CD4-positive, alpha-beta memory T cell (primary cell): ENCODE measurements at regions of chr5 and their contacts with region 1.

Region 1: DNA sequence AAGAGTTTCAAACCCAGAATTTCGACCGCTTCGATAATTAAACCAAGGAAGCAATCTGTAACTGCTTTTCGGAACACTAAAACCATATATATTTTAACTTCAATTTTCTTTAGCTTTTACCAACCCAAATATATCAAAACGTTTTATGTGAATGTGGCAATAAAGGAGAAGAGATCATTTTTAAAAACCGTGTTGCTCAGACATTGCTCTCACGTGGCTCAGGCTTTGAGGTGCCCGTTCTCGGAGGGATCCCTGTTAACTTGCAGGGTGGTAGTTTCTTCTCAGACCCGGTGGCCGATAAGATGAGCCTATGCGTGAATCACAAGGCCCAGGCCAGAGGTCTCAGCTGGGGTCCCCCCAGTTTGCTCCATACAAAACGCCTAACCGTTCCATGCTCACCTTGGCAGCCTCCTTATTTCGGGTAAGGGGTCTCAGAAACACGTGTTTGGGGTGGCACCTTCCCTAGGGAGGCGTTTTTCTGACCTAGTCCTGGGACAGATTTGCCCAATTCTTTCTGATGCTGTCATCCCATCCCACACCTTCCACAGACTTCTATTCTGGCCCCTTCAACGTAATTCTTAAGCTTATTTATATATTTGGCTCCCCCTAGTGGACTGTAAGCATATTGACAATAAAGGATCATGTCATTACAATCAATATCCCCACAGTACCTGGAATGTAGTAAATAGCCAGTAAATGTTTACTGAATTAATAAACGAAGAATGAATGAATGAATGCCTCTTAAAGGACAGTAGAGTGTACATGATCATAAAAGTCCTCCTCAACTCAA is 48.1 kb downstream of the THBS4 start:
- DNase-seq: peak in 4 of 5 donors; percentile 50 to 58 (median 54)
- H3K4me3 ChIP-seq: peak overlapping the region in 1 of 2 donors; percentile 34
- H3K4me3 Mint-ChIP-seq: peak overlapping the region; percentile 73 to 88 (median 86)
- H3K27ac ChIP-seq: no peak overlapping the region
- H3K27ac Mint-ChIP-seq: peak overlapping the region; percentile 16 to 92 (median 81)
- H3K4me1 ChIP-seq: peaks cover 11% of the 10 kb centered on the region
- H3K4me1 Mint-ChIP-seq: peaks cover 5 to 15% (median 7%) of the 10 kb centered on the region in 4 donors
- H3K27me3 ChIP-seq: no peaks in the 10 kb centered on the region
- H3K27me3 Mint-ChIP-seq: no peaks in the 10 kb centered on the region

Region 2: DNA sequence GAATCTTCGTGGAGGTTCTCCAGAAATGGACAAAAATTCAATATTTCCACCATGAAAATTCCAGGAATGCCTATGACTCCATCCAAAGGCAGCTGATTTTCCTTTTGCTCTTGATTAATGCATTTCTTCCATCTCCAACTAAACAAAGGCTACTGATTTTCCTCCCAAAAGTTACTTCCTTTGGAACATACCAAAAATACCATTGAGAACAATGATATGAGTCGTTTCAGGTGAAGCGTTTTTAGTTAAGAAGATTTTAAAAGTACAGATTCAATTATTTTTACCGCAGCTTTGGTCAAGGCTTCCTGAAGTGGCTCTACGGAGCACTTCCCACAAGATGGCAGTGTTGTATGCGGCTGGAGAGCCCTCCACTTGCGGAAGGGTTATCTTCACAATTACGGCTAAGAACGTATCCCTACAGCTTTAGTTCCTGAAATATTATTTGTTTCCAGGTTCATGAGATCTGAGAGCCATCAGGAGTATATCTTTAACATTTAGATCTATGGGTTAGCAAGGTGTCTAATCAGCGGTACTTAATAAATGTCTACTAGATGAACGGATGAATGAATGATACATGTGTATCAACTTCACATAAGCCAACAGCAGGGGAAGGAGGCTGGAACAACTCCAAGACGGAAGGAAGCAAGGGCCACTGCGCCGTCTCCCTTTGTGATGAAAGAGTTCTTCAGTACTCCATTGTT is 1062.3 kb before region 1 on chr5:
- CTCF ChIA-PET with region 1: interaction called, 3 read pairs
- POLR2A ChIA-PET with region 1: no interaction called
- intact Hi-C with region 1: loop called (anchors 10 kb)
- DNase-seq: peak in 3 of 5 donors; percentile 14 to 21 (median 18)
- H3K4me3 ChIP-seq: no peak overlapping the region
- H3K4me3 Mint-ChIP-seq: peak overlapping the region in 3 of 8 donors; percentile 11 to 33 (median 20)
- H3K27ac ChIP-seq: no peak overlapping the region
- H3K27ac Mint-ChIP-seq: no peak overlapping the region
- H3K4me1 ChIP-seq: no peaks in the 10 kb centered on the region
- H3K4me1 Mint-ChIP-seq: peaks cover 0 to 11% (median 4%) of the 10 kb centered on the region in 4 donors
- H3K27me3 ChIP-seq: peaks cover 12% of the 10 kb centered on the region
- H3K27me3 Mint-ChIP-seq: peaks cover 22 to 53% of the 10 kb centered on the region in 2 donors

Region 3: DNA sequence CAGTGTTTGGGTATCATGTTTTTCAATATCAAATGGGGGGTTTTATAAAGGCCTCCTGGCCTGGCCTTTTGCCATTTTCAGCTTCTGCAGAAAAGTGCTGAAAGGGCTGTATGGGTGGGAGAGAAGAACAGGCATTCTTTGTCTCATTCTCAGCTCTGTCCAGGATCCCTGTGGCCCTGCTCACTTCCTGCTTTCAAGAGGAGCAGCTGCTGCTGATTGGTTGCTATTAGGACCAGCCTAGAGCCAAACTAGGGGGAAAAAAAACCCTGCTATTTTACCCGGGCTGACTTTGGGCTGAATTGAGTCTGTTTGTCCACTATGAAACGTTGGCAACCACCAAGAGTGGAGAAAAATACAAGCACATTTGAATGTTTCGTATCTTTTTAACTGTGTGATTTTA is 276.6 kb before region 1 on chr5:
- CTCF ChIA-PET with region 1: no interaction called
- POLR2A ChIA-PET with region 1: no interaction called
- intact Hi-C with region 1: no loop called
- DNase-seq: no peak
- H3K4me3 ChIP-seq: no peak overlapping the region
- H3K4me3 Mint-ChIP-seq: no peak overlapping the region
- H3K27ac ChIP-seq: no peak overlapping the region
- H3K27ac Mint-ChIP-seq: no peak overlapping the region
- H3K4me1 ChIP-seq: peaks cover 7% of the 10 kb centered on the region
- H3K4me1 Mint-ChIP-seq: peaks cover 4 to 17% (median 11%) of the 10 kb centered on the region in 4 donors
- H3K27me3 ChIP-seq: no peaks in the 10 kb centered on the region
- H3K27me3 Mint-ChIP-seq: peaks cover 2% of the 10 kb centered on the region in 2 donors

Region 4: GRCh38 chr5:79924936-79925893 is 158.1 kb before region 1 on chr5:
- CTCF ChIA-PET with region 1: interaction called, 13 read pairs
- POLR2A ChIA-PET with region 1: no interaction called
- intact Hi-C with region 1: loop called (anchors 1 kb)
- DNase-seq: peak in 2 of 5 donors; percentile 2 to 13
- H3K4me3 ChIP-seq: no peak overlapping the region
- H3K4me3 Mint-ChIP-seq: no peak overlapping the region
- H3K27ac ChIP-seq: no peak overlapping the region
- H3K27ac Mint-ChIP-seq: no peak overlapping the region
- H3K4me1 ChIP-seq: no peaks in the 10 kb centered on the region
- H3K4me1 Mint-ChIP-seq: no peaks in the 10 kb centered on the region
- H3K27me3 ChIP-seq: no peaks in the 10 kb centered on the region
- H3K27me3 Mint-ChIP-seq: peaks cover 5% of the 10 kb centered on the region in 2 donors

Region 5: GRCh38 chr5:80060966-80061365 is 22.3 kb before region 1 on chr5:
- CTCF ChIA-PET with region 1: interaction called, 10 read pairs
- POLR2A ChIA-PET with region 1: no interaction called
- intact Hi-C with region 1: no loop called
- DNase-seq: no peak
- H3K4me3 ChIP-seq: no peak overlapping the region
- H3K4me3 Mint-ChIP-seq: no peak overlapping the region
- H3K27ac ChIP-seq: no peak overlapping the region
- H3K27ac Mint-ChIP-seq: peak overlapping the region in 1 of 7 donors; percentile 43
- H3K4me1 ChIP-seq: no peaks in the 10 kb centered on the region
- H3K4me1 Mint-ChIP-seq: peaks cover 0 to 8% (median 1%) of the 10 kb centered on the region in 4 donors
- H3K27me3 ChIP-seq: no peaks in the 10 kb centered on the region
- H3K27me3 Mint-ChIP-seq: no peaks in the 10 kb centered on the region

Region 6: DNA sequence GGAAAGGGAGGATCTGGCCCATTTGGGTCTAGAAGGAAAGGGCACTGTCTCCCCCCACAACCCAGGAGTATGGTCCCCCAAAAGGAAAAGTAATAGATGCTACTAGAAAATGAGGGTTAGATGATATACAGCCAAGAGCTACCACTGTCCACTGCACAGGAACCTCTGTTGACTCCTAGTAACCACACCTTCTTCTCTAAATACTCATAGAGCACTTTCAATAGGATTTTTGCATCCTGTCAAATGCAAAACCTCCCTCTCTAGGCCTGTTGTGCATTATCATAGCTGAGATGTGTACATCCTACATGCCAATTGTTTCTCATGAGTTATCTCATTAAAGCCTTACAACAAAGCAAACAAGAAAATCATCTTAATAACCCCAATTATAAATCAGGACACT is 18.7 kb after region 1 on chr5:
- CTCF ChIA-PET with region 1: interaction called, 25 read pairs
- POLR2A ChIA-PET with region 1: no interaction called
- intact Hi-C with region 1: no loop called
- DNase-seq: no peak
- H3K4me3 ChIP-seq: no peak overlapping the region
- H3K4me3 Mint-ChIP-seq: no peak overlapping the region
- H3K27ac ChIP-seq: no peak overlapping the region
- H3K27ac Mint-ChIP-seq: peak overlapping the region in 1 of 7 donors; percentile 52
- H3K4me1 ChIP-seq: no peaks in the 10 kb centered on the region
- H3K4me1 Mint-ChIP-seq: peaks cover 12 to 24% (median 17%) of the 10 kb centered on the region in 4 donors
- H3K27me3 ChIP-seq: no peaks in the 10 kb centered on the region
- H3K27me3 Mint-ChIP-seq: no peaks in the 10 kb centered on the region

Region 7: DNA sequence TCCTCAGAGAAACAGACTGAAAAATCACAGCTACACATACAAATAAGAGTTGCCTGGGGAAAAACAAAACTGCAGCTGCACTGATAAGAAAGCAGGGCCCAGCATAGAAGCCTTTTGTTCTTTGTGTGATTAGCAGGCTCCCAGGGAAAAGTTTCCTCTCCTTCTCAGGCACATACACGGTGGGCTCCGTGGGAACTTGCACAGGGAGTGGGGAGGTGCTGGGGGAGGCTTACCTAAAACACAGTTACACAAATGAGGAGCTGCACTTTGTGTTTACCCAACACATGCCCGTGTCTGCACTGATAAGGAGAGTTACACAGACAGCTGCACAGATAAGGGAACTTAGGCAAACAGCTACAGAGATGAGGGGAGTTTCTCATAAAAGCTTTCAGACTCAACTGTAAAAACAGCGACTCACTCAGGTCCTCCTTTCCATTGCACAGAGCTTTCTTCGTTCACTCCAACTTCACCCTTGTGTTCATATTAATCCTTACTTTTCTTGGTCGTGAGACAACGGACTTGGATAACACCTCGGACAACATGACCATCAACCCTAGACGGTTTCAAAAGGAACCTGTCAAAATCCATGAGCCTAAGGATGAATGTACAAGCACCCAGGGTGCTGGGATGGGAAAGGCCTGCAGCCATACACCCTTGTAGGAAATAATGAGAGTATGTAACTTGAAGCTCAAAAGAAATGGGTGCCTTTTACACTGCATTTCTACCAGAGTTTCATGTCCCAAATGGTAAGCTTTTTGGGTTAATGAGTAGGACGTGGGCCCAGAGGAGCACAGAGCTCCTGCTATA is 121.7 kb after region 1 on chr5:
- CTCF ChIA-PET with region 1: interaction called, 14 read pairs
- POLR2A ChIA-PET with region 1: no interaction called
- intact Hi-C with region 1: no loop called
- DNase-seq: no peak
- H3K4me3 ChIP-seq: no peak overlapping the region
- H3K4me3 Mint-ChIP-seq: peak overlapping the region; percentile 40 to 71 (median 58)
- H3K27ac ChIP-seq: peak overlapping the region; percentile 16
- H3K27ac Mint-ChIP-seq: peak overlapping the region; percentile 81 to 99 (median 88)
- H3K4me1 ChIP-seq: peaks cover 82% of the 10 kb centered on the region
- H3K4me1 Mint-ChIP-seq: peaks cover 72 to 94% (median 82%) of the 10 kb centered on the region in 4 donors
- H3K27me3 ChIP-seq: no peaks in the 10 kb centered on the region
- H3K27me3 Mint-ChIP-seq: no peaks in the 10 kb centered on the region